ENCODE measurements at regions of chr12 and their contacts with region 1.

Region 1: GRCh38 chr12:118537481-118537917 is 161.1 kb downstream of the SUDS3 start:
- DNase-seq: peak; percentile 88
- H3K4me3 ChIP-seq: no peak overlapping the region
- H3K27ac ChIP-seq: peak overlapping the region; percentile 81 to 93 (median 89)
- H3K4me1 ChIP-seq: peaks cover 0 to 48% (median 40%) of the 10 kb centered on the region in 4 donors
- H3K27me3 ChIP-seq: no peaks in the 10 kb centered on the region
- CTCF ChIP-seq: no peak
- EP300 ChIP-seq: peak; percentile 98 to 100 (median 99)
- POLR2A ChIP-seq: no peak

Region 2: GRCh38 chr12:118494789-118495188 is 42.7 kb before region 1 on chr12:
- intact Hi-C with region 1: loop called (anchors 2 kb)
- DNase-seq: no peak
- H3K4me3 ChIP-seq: no peak overlapping the region
- H3K27ac ChIP-seq: peak overlapping the region in 1 of 4 donors; percentile 39
- H3K4me1 ChIP-seq: peaks cover 0 to 43% (median 21%) of the 10 kb centered on the region in 4 donors
- H3K27me3 ChIP-seq: no peaks in the 10 kb centered on the region
- CTCF ChIP-seq: no peak
- EP300 ChIP-seq: no peak
- POLR2A ChIP-seq: no peak

Region 3: GRCh38 chr12:118560733-118561132 is 23.2 kb after region 1 on chr12:
- intact Hi-C with region 1: loop called (anchors 1 kb)
- DNase-seq: peak; percentile 79
- H3K4me3 ChIP-seq: no peak overlapping the region
- H3K27ac ChIP-seq: peak overlapping the region in 2 of 4 donors; percentile 19 to 30
- H3K4me1 ChIP-seq: peaks cover 0 to 27% (median 16%) of the 10 kb centered on the region in 4 donors
- H3K27me3 ChIP-seq: no peaks in the 10 kb centered on the region
- CTCF ChIP-seq: no peak
- EP300 ChIP-seq: peak in 3 of 4 donors; percentile 49 to 86 (median 60)
- POLR2A ChIP-seq: no peak

Region 4: GRCh38 chr12:119334430-119335170 is 797.1 kb after region 1 on chr12 and contains the start of gene CCDC60:
- intact Hi-C with region 1: loop called (anchors 5 kb)
- DNase-seq: no peak
- H3K4me3 ChIP-seq: peak within 1 kb of the TSS in 1 of 4 donors; percentile 7
- H3K27ac ChIP-seq: no peak within 1 kb of the TSS
- H3K4me1 ChIP-seq: no peaks in the 10 kb centered on the region
- H3K27me3 ChIP-seq: peaks cover 0 to 2% (median 0%) of the 10 kb centered on the region in 3 donors
- CTCF ChIP-seq: no peak
- EP300 ChIP-seq: no peak
- POLR2A ChIP-seq: no peak
- total RNA-seq, gene CCDC60: 1.1 to 2.8 (median 1.5) TPM